ENCODE measurements at regions of chr2 and their contacts with region 1.

Region 1: GRCh38 chr2:219229305-219230058 is at the starts of genes ANKZF1 and ATG9A:
- DNase-seq: peak; percentile 98
- H3K4me3 Mint-ChIP-seq: peak within 1 kb of the TSS; percentile 97
- H3K27ac Mint-ChIP-seq: peak within 1 kb of the TSS; percentile 99
- H3K4me1 Mint-ChIP-seq: peaks cover 47% of the 10 kb centered on the region
- H3K27me3 Mint-ChIP-seq: no peaks in the 10 kb centered on the region
- total RNA-seq, gene ANKZF1: 112 and 117 TPM in 2 replicates
- total RNA-seq, gene ATG9A: 55.3 and 57.0 TPM in 2 replicates

Region 2: GRCh38 chr2:219245148-219245898 is 15.8 kb after region 1 on chr2 and contains the starts of genes GLB1L and STK16:
- intact Hi-C with region 1: loop called (anchors 1 kb)
- DNase-seq: peak; percentile 89
- H3K4me3 Mint-ChIP-seq: peak within 1 kb of the TSS; percentile 99
- H3K27ac Mint-ChIP-seq: peak within 1 kb of the TSS; percentile 99
- H3K4me1 Mint-ChIP-seq: peaks cover 57% of the 10 kb centered on the region
- H3K27me3 Mint-ChIP-seq: no peaks in the 10 kb centered on the region
- total RNA-seq, gene GLB1L: 4.6 and 4.9 TPM in 2 replicates
- total RNA-seq, gene STK16: 30.1 and 30.6 TPM in 2 replicates

Region 3: GRCh38 chr2:219253753-219254590 is 24.5 kb after region 1 on chr2 and contains the start of gene TUBA4A:
- intact Hi-C with region 1: loop called (anchors 1 kb)
- DNase-seq: peak; percentile 87
- H3K4me3 Mint-ChIP-seq: peak within 1 kb of the TSS; percentile 93
- H3K27ac Mint-ChIP-seq: peak within 1 kb of the TSS; percentile 98
- H3K4me1 Mint-ChIP-seq: peaks cover 50% of the 10 kb centered on the region
- H3K27me3 Mint-ChIP-seq: no peaks in the 10 kb centered on the region
- total RNA-seq, gene TUBA4A: 211 and 217 TPM in 2 replicates